PC-3 (cell line): ENCODE measurements at regions of chr3 and their contacts with region 1.

Region 1: GRCh38 chr3:170324962-170325361 is 32.6 kb upstream of the SKIL start:
- DNase-seq: no peak
- ATAC-seq: no peak
- H3K4me3 ChIP-seq: no peak overlapping the region
- H3K27ac ChIP-seq: no peak overlapping the region
- H3K4me1 ChIP-seq: peaks cover 5% of the 10 kb centered on the region
- H3K27me3 ChIP-seq: no peaks in the 10 kb centered on the region
- CTCF ChIP-seq: peak; percentile 16; the same call in 1 of the 2 replicates

Region 2: DNA sequence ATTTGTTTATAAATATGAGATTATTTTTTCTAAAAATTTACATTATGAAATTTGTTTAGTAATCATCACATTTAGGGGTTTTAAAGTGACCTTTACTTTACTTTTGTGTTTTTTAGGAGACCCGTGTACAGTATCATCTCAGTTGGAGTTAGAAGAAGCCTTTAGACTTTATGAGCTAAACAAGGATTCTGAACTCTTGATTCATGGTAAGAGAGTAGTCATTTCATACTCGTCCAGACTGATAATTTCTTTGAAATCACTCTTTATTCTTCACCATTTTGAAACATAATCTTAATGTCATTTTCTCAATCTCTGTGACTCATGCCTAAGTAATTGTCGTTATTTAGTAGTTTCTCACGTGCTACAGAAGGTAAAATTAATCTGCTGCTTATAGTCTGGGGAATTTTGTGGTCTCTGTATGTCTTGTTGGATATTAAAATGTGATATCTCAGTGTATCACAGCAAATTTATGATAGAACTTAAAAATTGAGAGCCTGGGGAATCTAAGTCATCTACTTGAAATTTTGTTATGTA is 65.0 kb before region 1 on chr3:
- CTCF ChIA-PET with region 1: no interaction called
- POLR2A ChIA-PET with region 1: interaction called, 13 read pairs
- intact Hi-C with region 1: no loop called
- DNase-seq: no peak
- ATAC-seq: no peak
- H3K4me3 ChIP-seq: no peak overlapping the region
- H3K27ac ChIP-seq: no peak overlapping the region
- H3K4me1 ChIP-seq: peaks cover 8% of the 10 kb centered on the region
- H3K27me3 ChIP-seq: no peaks in the 10 kb centered on the region
- CTCF ChIP-seq: no peak